Left lung (tissue), 14 donors: ENCODE measurements at regions of chr9 and their contacts with region 1.

Region 1: DNA sequence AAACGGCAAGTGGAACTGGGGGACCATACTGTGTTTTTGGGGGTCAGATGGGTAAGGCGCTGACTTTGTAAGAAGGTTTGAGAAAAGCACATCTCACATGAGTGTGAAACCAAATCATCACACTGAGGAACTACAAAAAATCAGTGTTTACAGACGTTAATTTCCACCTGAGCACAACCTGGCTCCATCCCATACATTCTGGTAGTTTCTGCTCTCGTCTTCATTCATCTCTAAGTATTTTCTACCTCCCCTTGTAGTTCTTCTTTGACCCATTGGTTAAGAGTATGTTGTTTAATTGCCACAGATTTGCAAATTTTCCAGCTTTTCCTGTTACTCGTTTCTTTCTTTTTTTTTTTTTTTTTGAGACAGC is 8.9 kb upstream of the DPP7 start:
- DNase-seq: no peak
- ATAC-seq: no peak
- H3K4me3 ChIP-seq: no peak overlapping the region
- H3K27ac ChIP-seq: no peak overlapping the region
- H3K4me1 ChIP-seq: peaks cover 13 to 21% of the 10 kb centered on the region in 2 donors
- H3K27me3 ChIP-seq: no peaks in the 10 kb centered on the region
- CTCF ChIP-seq: no peak

Region 2: DNA sequence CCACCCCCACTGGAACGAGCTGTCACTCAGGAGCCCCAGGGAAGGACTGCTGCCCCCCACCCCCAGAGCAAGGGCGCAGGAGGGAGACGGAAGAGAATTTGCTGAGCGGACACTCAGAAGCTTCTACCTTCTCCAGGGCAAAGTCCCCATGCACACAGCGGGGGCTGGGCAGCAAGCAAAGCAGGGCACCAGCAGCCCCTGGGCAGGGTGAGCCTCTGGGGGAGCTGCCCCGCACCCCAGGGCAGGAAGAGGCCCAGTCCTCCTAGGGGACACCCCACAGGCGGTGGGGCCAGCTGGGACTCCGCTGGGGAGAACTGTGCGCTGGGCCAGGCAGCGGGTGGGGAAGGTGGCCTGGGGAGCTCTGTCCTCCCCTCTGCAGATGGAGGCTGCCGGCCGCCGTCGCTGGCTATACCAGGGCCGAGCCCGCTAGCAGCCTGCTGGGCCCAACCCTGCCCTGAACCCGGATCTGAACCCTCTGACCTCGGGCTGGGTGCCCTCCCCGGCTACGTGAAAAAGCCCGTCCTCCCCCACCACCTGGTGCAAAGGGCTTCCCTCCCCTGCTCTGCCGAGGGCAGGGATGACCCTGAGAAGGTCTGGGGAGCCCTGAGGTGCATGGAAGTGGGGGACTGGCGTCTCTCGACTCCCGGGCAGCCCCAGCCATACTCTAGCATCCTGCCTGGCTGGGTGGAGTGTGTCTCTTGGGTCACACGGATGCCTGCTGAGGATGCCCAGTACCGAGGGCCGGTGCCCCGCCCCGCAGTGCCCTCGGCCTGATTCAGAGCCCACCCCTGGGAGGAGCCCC is 106.7 kb after region 1 on chr9:
- intact Hi-C with region 1: loop called in 1 of 2 experiments (anchors 2 kb)
- DNase-seq: no peak
- ATAC-seq: no peak
- H3K4me3 ChIP-seq: no peak overlapping the region
- H3K27ac ChIP-seq: no peak overlapping the region
- H3K4me1 ChIP-seq: peaks cover 3 to 16% of the 10 kb centered on the region in 2 donors
- H3K27me3 ChIP-seq: peaks cover 0 to 85% of the 10 kb centered on the region in 2 donors
- CTCF ChIP-seq: no peak